Ovary (tissue), 10 donors: ENCODE measurements at regions of chr5 and their contacts with region 1.

Region 1: GRCh38 chr5:20636686-20637085 is 648.7 kb upstream of the CDH18 start:
- DNase-seq: no peak
- H3K4me3 ChIP-seq: no peak overlapping the region
- H3K27ac ChIP-seq: no peak overlapping the region
- H3K4me1 ChIP-seq: no peaks in the 10 kb centered on the region
- H3K27me3 ChIP-seq: no peaks in the 10 kb centered on the region
- CTCF ChIP-seq: no peak
- EP300 ChIP-seq: no peak
- POLR2A ChIP-seq: no peak

Region 2: DNA sequence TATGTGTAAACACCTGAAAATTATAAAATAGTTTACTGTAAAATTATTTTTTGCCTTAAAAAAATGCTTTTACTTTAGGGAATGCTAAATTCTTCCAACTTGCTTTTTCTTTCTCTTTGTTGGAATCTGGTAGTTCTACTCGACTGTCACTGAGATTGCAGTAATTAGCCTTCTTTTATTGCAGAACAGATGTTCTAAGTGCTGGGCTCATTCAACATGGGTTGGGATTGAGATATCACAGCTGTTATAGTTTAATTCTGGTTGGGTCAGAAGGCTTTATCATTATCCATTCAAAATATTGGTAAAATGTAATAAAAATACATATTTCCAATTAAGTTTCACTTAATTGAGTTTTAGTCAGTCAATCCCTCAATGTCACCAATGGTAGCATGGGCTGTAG is 1335.4 kb before region 1 on chr5:
- intact Hi-C with region 1: no loop called
- DNase-seq: no peak
- H3K4me3 ChIP-seq: no peak overlapping the region
- H3K27ac ChIP-seq: no peak overlapping the region
- H3K4me1 ChIP-seq: no peaks in the 10 kb centered on the region
- H3K27me3 ChIP-seq: no peaks in the 10 kb centered on the region
- CTCF ChIP-seq: no peak
- EP300 ChIP-seq: no peak
- POLR2A ChIP-seq: no peak

Region 3: GRCh38 chr5:21817668-21818369 is 1181.1 kb after region 1 on chr5:
- intact Hi-C with region 1: loop called in 1 of 4 experiments (anchors 5 kb)
- DNase-seq: no peak
- H3K4me3 ChIP-seq: no peak overlapping the region
- H3K27ac ChIP-seq: no peak overlapping the region
- H3K4me1 ChIP-seq: no peaks in the 10 kb centered on the region
- H3K27me3 ChIP-seq: no peaks in the 10 kb centered on the region
- CTCF ChIP-seq: no peak
- EP300 ChIP-seq: no peak
- POLR2A ChIP-seq: no peak